ENCODE measurements at regions of chr16 and their contacts with region 1.

Region 1: GRCh38 chr16:56700195-56700594 is 17.9 kb downstream of the MT1X start:
- DNase-seq: no peak
- ATAC-seq: no peak
- H3K4me3 Mint-ChIP-seq: no peak overlapping the region
- H3K27ac Mint-ChIP-seq: peak overlapping the region in 3 of 10 donors; percentile 6 to 30 (median 29)
- H3K4me1 Mint-ChIP-seq: peaks cover 0 to 15% (median 12%) of the 10 kb centered on the region in 4 donors
- H3K27me3 Mint-ChIP-seq: no peaks in the 10 kb centered on the region

Region 2: DNA sequence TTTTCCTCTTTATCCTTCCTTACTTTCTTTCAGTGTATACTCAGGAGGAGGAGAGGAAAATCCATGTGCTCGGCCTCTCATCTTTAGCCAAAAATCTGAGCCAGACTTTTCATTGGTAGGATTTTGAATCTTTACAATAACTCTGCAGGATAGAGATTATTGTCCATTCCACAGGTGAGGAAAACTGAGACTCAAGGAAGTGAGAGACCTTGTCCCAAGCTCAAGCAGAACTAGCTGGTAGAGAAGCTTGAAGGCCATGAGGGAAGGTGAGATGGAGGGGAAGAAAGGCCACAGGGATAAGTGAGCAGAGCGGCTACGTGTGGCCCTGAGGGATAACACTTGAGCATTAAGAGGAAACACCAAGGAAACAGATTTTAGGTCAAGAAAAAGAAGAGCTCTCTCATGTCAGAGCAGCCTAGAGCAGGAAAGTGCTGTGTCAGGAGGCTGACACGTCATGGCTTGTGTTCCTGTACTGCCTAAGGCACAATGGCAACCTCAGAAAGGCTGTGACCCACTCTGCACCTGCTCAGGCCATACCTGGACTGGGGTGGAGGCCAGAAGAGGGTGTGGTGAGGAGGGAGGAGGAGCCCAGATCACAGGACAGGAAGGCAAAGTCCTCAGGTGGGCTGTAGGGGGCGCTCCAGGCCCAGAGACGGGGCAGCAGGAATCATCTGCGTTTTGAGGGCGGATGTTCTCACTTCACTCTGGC is 123.5 kb before region 1 on chr16:
- POLR2A ChIA-PET with region 1: interaction called, 16 read pairs
- DNase-seq: peak; percentile 78 to 93 (median 88)
- ATAC-seq: peak; percentile 100
- H3K4me3 Mint-ChIP-seq: no peak overlapping the region
- H3K27ac Mint-ChIP-seq: peak overlapping the region in 8 of 10 donors; percentile 38 to 89 (median 74)
- H3K4me1 Mint-ChIP-seq: peaks cover 6 to 10% (median 6%) of the 10 kb centered on the region in 4 donors
- H3K27me3 Mint-ChIP-seq: no peaks in the 10 kb centered on the region

Region 3: DNA sequence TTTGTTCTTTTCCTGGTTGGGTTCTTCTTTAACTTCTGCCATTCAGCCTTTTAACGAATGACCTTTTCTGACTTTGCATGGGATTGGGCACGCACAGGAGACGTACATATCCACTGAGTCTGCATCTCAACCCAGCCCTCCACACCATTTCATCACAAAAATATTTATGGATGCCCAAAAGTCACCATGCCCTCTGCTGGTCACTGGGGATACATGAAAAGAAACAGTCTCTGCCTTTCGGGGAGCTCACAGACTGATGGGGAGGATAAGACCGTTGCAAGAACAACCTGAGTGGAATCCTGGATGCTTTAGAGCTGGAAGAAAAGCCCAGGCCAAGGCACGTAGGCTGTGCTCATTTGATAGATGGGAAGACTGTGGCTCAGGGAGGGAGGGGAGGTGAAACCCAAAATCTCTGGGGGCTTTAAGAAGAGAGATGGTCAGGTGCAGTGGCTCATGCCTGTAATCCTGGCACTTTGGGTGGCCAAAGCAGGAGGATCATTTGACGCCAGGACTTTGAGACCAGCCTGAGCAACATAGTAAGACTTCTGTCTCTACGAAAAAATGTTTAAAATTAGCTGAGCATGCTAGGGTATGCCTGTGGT is 99.7 kb before region 1 on chr16:
- POLR2A ChIA-PET with region 1: interaction called, 21 read pairs
- DNase-seq: peak in 1 of 10 donors; percentile 36
- ATAC-seq: peak; percentile 38 to 46
- H3K4me3 Mint-ChIP-seq: no peak overlapping the region
- H3K27ac Mint-ChIP-seq: peak overlapping the region in 2 of 10 donors; percentile 17 to 38
- H3K4me1 Mint-ChIP-seq: peaks cover 0 to 9% (median 3%) of the 10 kb centered on the region in 4 donors
- H3K27me3 Mint-ChIP-seq: peaks cover 0 to 6% (median 0%) of the 10 kb centered on the region in 5 donors

Region 4: GRCh38 chr16:56657555-56658326 is 42.5 kb before region 1 on chr16 and contains the start of gene MT1F:
- POLR2A ChIA-PET with region 1: interaction called, 12 read pairs
- DNase-seq: peak; percentile 43 to 80 (median 68)
- ATAC-seq: peak; percentile 80 to 83
- H3K4me3 Mint-ChIP-seq: peak within 1 kb of the TSS; percentile 92 to 99 (median 97)
- H3K27ac Mint-ChIP-seq: peak within 1 kb of the TSS; percentile 87 to 98 (median 97)
- H3K4me1 Mint-ChIP-seq: peaks cover 23 to 46% (median 38%) of the 10 kb centered on the region in 4 donors
- H3K27me3 Mint-ChIP-seq: peaks cover 0 to 8% (median 2%) of the 10 kb centered on the region in 5 donors
- polyA plus RNA-seq, gene MT1F: 82.3 to 97.4 (median 94.2) TPM

Region 5: DNA sequence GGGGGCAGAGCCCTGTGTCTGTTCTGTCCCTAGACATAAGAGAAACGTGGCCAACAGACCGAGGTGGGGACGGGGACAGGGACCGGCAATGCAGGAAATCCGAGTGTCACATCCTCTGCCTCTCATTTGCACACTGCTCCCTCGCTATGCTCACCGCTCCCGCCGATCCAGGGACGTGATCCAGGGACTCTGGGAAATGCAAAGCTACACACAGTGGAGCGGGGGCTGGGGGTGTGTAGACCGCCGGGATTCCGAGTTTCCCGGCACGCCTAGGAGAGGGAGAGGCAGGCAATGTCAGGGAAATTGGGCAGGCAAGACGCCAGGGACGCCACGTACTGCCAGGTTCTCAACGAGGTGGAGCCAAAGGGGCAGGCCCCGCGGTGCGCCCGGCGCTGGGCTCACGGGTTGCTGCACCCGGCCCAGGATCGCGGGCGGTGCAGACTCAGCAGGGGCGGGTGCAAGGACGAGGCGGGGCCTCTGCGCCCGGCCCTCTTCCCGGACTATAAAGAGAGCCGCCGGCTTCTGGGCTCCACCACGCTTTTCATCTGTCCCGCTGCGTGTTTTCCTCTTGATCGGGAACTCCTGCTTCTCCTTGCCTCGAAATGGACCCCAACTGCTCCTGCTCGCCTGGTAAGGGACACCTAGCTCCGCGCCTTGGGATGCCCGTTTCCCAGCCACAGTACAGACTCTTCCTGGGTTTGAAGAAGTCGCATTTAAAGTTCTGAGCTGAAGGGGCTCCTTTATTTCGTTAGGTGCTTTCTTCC is 18.1 kb before region 1 on chr16 and contains the start of gene MT1X:
- POLR2A ChIA-PET with region 1: interaction called, 18 read pairs
- DNase-seq: peak; percentile 77 to 94 (median 86)
- ATAC-seq: peak; percentile 98 to 99
- H3K4me3 Mint-ChIP-seq: peak within 1 kb of the TSS; percentile 94 to 99 (median 96)
- H3K27ac Mint-ChIP-seq: peak within 1 kb of the TSS; percentile 94 to 99 (median 98)
- H3K4me1 Mint-ChIP-seq: peaks cover 17 to 36% (median 28%) of the 10 kb centered on the region in 4 donors
- H3K27me3 Mint-ChIP-seq: no peaks in the 10 kb centered on the region
- polyA plus RNA-seq, gene MT1X: 185 to 201 (median 201) TPM